Endothelial cell of umbilical vein (primary cell): ENCODE measurements at regions of chr7 and their contacts with region 1.

Region 1: GRCh38 chr7:50610521-50611277 is 45.5 kb upstream of the DDC start:
- DNase-seq: peak; percentile 52
- H3K4me3 ChIP-seq: no peak overlapping the region
- H3K27ac ChIP-seq: peak overlapping the region; percentile 38
- H3K4me1 ChIP-seq: peaks cover 23% of the 10 kb centered on the region
- H3K27me3 ChIP-seq: no peaks in the 10 kb centered on the region
- CTCF ChIP-seq: no peak
- POLR2A ChIP-seq: no peak

Region 2: DNA sequence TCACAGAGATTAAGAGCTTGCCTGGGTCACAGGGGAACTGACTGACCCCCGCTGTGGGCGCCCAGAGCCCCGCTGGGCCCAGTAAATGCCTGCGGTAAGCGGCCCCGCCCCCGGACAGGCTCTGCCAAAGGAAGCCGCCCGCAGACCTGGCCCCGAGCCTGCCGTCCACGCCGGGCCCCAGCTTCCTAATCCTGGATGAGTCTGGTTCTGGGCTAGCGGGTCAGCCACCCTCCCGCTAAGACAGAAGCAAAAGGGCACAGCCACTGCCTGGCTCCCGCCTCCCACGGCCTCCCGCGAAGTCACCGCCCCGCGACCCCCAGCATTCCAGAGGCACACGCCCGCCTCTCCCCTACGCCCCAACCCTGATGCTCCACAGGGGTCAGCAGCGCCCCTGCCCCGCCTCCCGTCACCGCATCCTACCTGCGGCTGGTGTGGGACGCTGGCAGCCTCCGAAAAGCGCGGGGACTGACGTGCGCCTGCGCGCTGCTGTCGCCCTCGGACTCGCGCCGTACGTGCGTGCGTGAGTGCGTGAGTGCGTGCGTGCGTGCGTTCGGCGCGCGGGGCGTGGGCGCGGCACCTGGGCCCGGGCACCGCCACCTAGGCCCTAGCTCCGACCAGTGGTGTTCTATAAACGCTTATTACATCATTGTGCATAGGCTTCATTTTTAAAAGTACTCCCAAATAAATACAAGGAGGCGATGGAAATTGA is 160.7 kb before region 1 on chr7 and contains the start of gene FIGNL1:
- CTCF ChIA-PET with region 1: no interaction called
- POLR2A ChIA-PET with region 1: no interaction called
- dilution Hi-C with region 1: no loop called
- intact Hi-C with region 1: no loop called
- DNase-seq: peak; percentile 78
- H3K4me3 ChIP-seq: peak within 1 kb of the TSS; percentile 44 to 98 (median 64)
- H3K27ac ChIP-seq: peak within 1 kb of the TSS; percentile 66
- H3K4me1 ChIP-seq: peaks cover 38% of the 10 kb centered on the region
- H3K27me3 ChIP-seq: peaks cover 0 to 5% of the 10 kb centered on the region in 2 experiments
- CTCF ChIP-seq: no peak
- POLR2A ChIP-seq: peak; percentile 79
- total RNA-seq, gene FIGNL1: 37.2 and 49.3 TPM in 2 replicates

Region 3: GRCh38 chr7:50621206-50621605 is 10.5 kb after region 1 on chr7:
- CTCF ChIA-PET with region 1: no interaction called
- POLR2A ChIA-PET with region 1: no interaction called
- dilution Hi-C with region 1: no loop called
- intact Hi-C with region 1: loop called (anchors 2 kb)
- DNase-seq: no peak
- H3K4me3 ChIP-seq: no peak overlapping the region
- H3K27ac ChIP-seq: no peak overlapping the region
- H3K4me1 ChIP-seq: peaks cover 7% of the 10 kb centered on the region
- H3K27me3 ChIP-seq: no peaks in the 10 kb centered on the region
- CTCF ChIP-seq: no peak
- POLR2A ChIP-seq: no peak

Region 4: GRCh38 chr7:50711257-50712175 is 100.8 kb after region 1 on chr7:
- CTCF ChIA-PET with region 1: no interaction called
- POLR2A ChIA-PET with region 1: no interaction called
- dilution Hi-C with region 1: no loop called
- intact Hi-C with region 1: no loop called
- DNase-seq: no peak
- H3K4me3 ChIP-seq: no peak overlapping the region
- H3K27ac ChIP-seq: no peak overlapping the region
- H3K4me1 ChIP-seq: no peaks in the 10 kb centered on the region
- H3K27me3 ChIP-seq: no peaks in the 10 kb centered on the region
- CTCF ChIP-seq: no peak
- POLR2A ChIP-seq: no peak